ENCODE measurements at regions of chr2 and their contacts with region 1.

Region 1: GRCh38 chr2:217713395-217714286 is 289.2 kb downstream of the TNS1 start:
- DNase-seq: peak; percentile 62 to 97
- H3K4me3 ChIP-seq: no peak overlapping the region
- H3K27ac ChIP-seq: no peak overlapping the region
- H3K4me1 ChIP-seq: 0 out of 7 replicates have a peak, but pooled peaks cover 0 to 1% (median 0%) of the 10 kb centered on the region in 4 experiments
- H3K27me3 ChIP-seq: 0 out of 7 replicates have a peak, but pooled peaks cover 0 to 3% (median 0%) of the 10 kb centered on the region in 4 experiments
- CTCF ChIP-seq: peak; percentile 93 to 97 (median 96)
- EP300 ChIP-seq: no peak
- POLR2A ChIP-seq: no peak
- RAD21 ChIP-seq: peak; percentile 99

Region 2: DNA sequence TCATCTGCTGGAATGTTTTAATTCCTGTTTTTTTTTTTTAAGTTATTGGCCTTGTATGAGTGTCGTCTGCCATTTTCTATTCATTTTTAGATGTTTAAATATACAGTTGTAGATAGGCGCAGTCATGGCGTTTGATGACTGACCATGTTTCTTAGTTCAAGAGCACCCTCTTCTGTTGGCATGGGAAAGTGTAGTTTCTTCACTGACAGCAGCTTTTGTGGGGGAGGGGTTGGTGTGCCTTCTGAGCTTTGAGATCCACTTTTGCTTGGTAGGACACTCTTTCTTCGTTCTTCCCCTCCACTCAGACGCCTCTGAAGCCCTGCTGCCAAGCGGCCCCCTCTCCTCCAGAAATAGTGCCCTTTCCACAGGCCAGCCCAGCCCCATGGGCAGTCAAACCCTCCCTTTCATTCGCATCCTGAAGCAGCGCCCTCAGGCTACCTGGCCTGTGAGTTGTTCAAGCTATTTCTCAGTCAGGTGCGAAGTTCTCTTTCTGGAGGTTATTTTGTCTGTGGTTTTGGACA is 202.8 kb before region 1 on chr2:
- CTCF ChIA-PET with region 1: interaction called, 38 read pairs
- POLR2A ChIA-PET with region 1: no interaction called
- DNase-seq: peak; percentile 15 to 65
- H3K4me3 ChIP-seq: peak overlapping the region in 1 of 4 experiments; percentile 33; a peak in 3 of 8 replicates
- H3K27ac ChIP-seq: no peak overlapping the region
- H3K4me1 ChIP-seq: peaks cover 0 to 3% (median 2%) of the 10 kb centered on the region in 4 experiments; a peak in 3 of 7 replicates
- H3K27me3 ChIP-seq: no peaks in the 10 kb centered on the region
- CTCF ChIP-seq: peak; percentile 45 to 82 (median 79)
- EP300 ChIP-seq: no peak
- POLR2A ChIP-seq: no peak
- RAD21 ChIP-seq: peak; percentile 97 to 98

Region 3: DNA sequence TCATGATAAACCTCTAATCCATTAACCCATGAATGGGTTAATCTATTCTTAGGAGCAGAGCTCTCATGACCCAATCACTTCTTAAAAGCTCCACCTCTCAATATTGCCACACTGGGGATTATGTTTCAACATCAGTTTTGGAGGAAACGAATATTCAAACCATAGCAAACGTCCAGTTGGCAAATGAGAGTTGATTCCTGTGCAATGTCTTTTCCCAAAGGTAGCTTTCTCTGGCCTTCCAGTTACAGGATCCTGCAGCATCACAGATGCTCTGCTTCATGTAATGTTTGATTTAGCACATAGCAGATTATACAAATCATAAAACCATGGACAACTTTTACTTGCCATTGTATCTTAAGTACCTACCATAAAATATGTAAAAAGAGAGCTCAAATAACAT is 191.8 kb before region 1 on chr2:
- CTCF ChIA-PET with region 1: interaction called, 11 read pairs
- POLR2A ChIA-PET with region 1: no interaction called
- DNase-seq: no peak
- H3K4me3 ChIP-seq: no peak overlapping the region
- H3K27ac ChIP-seq: no peak overlapping the region
- H3K4me1 ChIP-seq: no peaks in the 10 kb centered on the region
- H3K27me3 ChIP-seq: no peaks in the 10 kb centered on the region
- CTCF ChIP-seq: no peak
- EP300 ChIP-seq: no peak
- POLR2A ChIP-seq: no peak
- RAD21 ChIP-seq: no peak

Region 4: DNA sequence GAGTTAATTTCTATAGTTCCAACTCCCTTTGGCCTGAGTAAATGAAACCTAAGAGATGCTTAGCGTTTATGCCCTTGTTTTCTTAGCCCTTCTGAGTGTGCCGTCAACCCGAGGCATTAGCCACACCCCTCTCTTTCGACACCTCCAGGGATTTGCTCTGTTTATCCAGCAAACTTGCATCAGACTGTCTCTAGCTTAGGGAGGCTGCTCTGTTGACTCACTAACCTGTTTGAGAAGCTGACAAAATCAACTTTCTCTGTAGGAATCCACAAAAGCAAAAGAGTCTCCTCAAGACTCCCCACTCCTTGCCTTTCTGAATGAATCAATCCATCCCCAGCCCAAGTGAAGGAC is 28.4 kb before region 1 on chr2:
- CTCF ChIA-PET with region 1: interaction called, 15 read pairs
- POLR2A ChIA-PET with region 1: no interaction called
- DNase-seq: no peak
- H3K4me3 ChIP-seq: no peak overlapping the region
- H3K27ac ChIP-seq: no peak overlapping the region
- H3K4me1 ChIP-seq: no peaks in the 10 kb centered on the region; a peak in 1 of 7 replicates
- H3K27me3 ChIP-seq: peaks cover 0 to 6% (median 3%) of the 10 kb centered on the region in 4 experiments; a peak in 3 of 7 replicates
- CTCF ChIP-seq: no peak
- EP300 ChIP-seq: no peak
- POLR2A ChIP-seq: no peak
- RAD21 ChIP-seq: no peak

Region 5: DNA sequence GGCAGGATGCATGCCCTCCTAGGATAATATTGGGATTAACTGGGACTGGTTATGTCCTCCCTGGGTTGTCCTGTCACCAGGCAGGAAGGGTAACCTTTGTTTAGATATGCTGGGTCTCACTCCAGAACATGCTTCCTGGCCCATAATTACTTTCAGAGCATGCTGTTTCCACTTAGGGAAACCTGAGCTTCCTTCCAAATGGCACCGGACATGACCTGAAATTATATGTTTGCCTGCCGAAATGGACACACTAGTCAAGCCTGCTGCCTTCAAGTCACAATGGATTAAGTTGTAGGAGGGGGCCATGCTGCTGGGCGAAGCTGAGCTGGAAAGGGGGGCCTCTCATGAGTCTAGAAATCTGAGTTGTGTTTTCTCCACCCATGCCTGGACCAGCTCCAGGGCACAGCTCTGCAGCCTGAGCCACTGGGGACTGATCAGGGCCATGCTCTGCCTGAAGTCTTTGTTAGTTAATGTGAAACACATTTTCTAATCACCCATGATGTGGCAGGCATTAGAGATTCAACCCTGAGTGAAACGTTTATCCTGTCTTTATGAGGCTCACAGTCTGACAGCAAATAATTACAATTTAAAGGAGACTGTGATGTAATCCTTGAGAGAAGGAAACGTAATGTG is 15.9 kb after region 1 on chr2:
- CTCF ChIA-PET with region 1: interaction called, 13 read pairs
- POLR2A ChIA-PET with region 1: no interaction called
- DNase-seq: no peak
- H3K4me3 ChIP-seq: no peak overlapping the region
- H3K27ac ChIP-seq: no peak overlapping the region
- H3K4me1 ChIP-seq: no peaks in the 10 kb centered on the region
- H3K27me3 ChIP-seq: no peaks in the 10 kb centered on the region
- CTCF ChIP-seq: no peak
- EP300 ChIP-seq: no peak
- POLR2A ChIP-seq: no peak
- RAD21 ChIP-seq: no peak

Measured in H1 (cell line).